CD4-positive, alpha-beta memory T cell (primary cell): ENCODE measurements at regions of chr18 and their contacts with region 1.

Region 1: DNA sequence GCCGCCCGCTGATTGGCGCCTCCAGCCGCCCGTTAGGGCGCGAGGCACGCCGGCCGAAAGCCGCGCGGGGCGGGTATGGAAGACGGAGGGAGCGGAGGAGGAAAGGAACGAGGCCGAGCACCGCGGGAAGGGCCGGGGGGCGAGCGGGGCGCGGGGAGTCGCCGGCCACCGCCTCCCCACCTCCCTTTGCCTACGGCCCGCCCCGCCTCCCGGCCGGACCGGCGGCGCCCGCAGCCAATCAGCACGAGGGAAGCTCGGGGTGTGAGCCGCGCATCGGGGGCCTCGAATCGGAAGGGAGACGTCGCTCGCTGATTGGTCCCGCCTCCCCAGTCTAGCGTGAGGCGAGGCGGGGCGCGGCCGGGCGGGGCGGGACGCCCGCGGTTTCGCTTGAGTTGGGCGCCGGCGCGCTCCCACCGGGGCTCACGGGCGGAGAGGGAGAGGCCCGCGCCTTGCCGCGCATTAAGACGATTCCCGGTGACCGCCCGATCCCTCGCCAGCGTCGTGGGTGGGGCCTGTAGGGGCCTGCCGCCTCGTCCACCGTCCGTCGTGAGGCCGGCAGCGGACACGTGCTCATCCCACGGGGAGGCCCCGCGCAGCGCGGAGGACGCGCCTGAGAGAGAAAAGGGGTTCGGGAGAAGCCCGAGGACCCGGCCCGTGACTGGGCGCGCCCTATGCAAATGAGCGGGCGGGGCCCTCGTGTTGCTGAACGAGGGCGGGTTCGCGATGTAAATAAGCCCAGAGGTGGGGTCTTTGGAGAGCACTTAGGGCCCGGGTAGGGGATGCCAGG is 665 bp upstream of the SMAD2 start:
- DNase-seq: peak; percentile 94 to 97 (median 96)
- H3K4me3 ChIP-seq: peak overlapping the region; percentile 26 to 70
- H3K4me3 Mint-ChIP-seq: peak overlapping the region; percentile 83 to 94 (median 87)
- H3K27ac ChIP-seq: peak overlapping the region; percentile 82
- H3K27ac Mint-ChIP-seq: peak overlapping the region; percentile 87 to 97 (median 93)
- H3K4me1 ChIP-seq: peaks cover 49% of the 10 kb centered on the region
- H3K4me1 Mint-ChIP-seq: peaks cover 36 to 46% (median 41%) of the 10 kb centered on the region in 4 donors
- H3K27me3 ChIP-seq: no peaks in the 10 kb centered on the region
- H3K27me3 Mint-ChIP-seq: no peaks in the 10 kb centered on the region

Region 2: DNA sequence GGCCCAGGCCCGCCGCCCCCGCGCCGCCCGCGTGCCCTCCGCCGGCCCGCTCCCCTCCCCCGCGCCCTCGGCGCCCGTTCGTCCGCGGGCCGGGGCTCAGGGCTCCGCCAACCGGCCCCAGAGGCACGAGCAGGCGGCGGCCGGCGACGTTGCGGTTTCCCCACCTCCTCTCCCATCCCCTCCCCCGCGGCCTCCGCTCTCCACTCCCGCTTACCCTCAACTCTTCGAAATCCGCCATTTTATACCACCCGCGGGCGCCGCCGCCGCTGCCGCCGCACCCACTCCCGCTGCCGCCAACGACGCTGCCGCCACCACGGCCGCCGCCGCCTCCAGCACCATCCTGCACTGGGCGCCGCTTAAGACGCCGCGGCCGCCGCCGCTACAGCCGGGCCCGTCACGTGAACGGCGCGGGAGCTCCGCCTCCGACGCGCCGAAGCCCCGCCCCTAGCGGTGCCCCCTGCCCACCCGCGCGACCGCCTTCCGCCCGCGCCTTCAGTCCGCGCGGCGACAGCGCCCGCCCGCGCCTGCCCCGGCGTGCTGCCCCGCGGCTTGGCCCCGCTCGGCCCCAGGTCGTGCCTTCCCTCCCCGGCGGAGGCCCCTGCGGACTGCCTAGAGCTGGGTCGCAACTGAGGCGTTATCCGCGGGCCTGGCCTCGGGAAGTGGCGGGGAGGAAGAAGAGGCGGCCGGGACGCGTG is 1013.9 kb before region 1 on chr18 and contains the starts of genes KATNAL2 and PIAS2:
- CTCF ChIA-PET with region 1: no interaction called
- POLR2A ChIA-PET with region 1: no interaction called
- intact Hi-C with region 1: loop called (anchors 5 kb)
- DNase-seq: peak; percentile 72 to 79 (median 73)
- H3K4me3 ChIP-seq: peak within 1 kb of the TSS; percentile 60 to 66
- H3K4me3 Mint-ChIP-seq: peak within 1 kb of the TSS; percentile 91 to 96 (median 92)
- H3K27ac ChIP-seq: peak within 1 kb of the TSS; percentile 40
- H3K27ac Mint-ChIP-seq: peak within 1 kb of the TSS; percentile 89 to 95 (median 91)
- H3K4me1 ChIP-seq: peaks cover 27% of the 10 kb centered on the region
- H3K4me1 Mint-ChIP-seq: peaks cover 35 to 56% (median 47%) of the 10 kb centered on the region in 4 donors
- H3K27me3 ChIP-seq: no peaks in the 10 kb centered on the region
- H3K27me3 Mint-ChIP-seq: no peaks in the 10 kb centered on the region
- total RNA-seq, gene KATNAL2: 0.94 to 2.1 TPM
- total RNA-seq, gene PIAS2: 36.2 to 38.3 TPM

Region 3: GRCh38 chr18:47870605-47871004 is 60.5 kb before region 1 on chr18:
- CTCF ChIA-PET with region 1: no interaction called
- POLR2A ChIA-PET with region 1: interaction called, 3 read pairs
- intact Hi-C with region 1: loop called (anchors 2 kb)
- DNase-seq: no peak
- H3K4me3 ChIP-seq: no peak overlapping the region
- H3K4me3 Mint-ChIP-seq: no peak overlapping the region
- H3K27ac ChIP-seq: no peak overlapping the region
- H3K27ac Mint-ChIP-seq: peak overlapping the region in 1 of 7 donors; percentile 6
- H3K4me1 ChIP-seq: peaks cover 11% of the 10 kb centered on the region
- H3K4me1 Mint-ChIP-seq: peaks cover 18 to 49% (median 33%) of the 10 kb centered on the region in 4 donors
- H3K27me3 ChIP-seq: no peaks in the 10 kb centered on the region
- H3K27me3 Mint-ChIP-seq: no peaks in the 10 kb centered on the region

Region 4: GRCh38 chr18:47901624-47902362 is 29.3 kb before region 1 on chr18:
- CTCF ChIA-PET with region 1: interaction called, 5 read pairs
- POLR2A ChIA-PET with region 1: interaction called, 23 read pairs
- intact Hi-C with region 1: loop called (anchors 1 kb)
- DNase-seq: peak in 4 of 5 donors; percentile 41 to 60 (median 48)
- H3K4me3 ChIP-seq: no peak overlapping the region
- H3K4me3 Mint-ChIP-seq: peak overlapping the region in 7 of 8 donors; percentile 39 to 81 (median 65)
- H3K27ac ChIP-seq: peak overlapping the region; percentile 30
- H3K27ac Mint-ChIP-seq: peak overlapping the region; percentile 78 to 94 (median 88)
- H3K4me1 ChIP-seq: peaks cover 53% of the 10 kb centered on the region
- H3K4me1 Mint-ChIP-seq: peaks cover 56 to 85% (median 62%) of the 10 kb centered on the region in 4 donors
- H3K27me3 ChIP-seq: no peaks in the 10 kb centered on the region
- H3K27me3 Mint-ChIP-seq: no peaks in the 10 kb centered on the region

Region 5: GRCh38 chr18:47917923-47918610 is 13.1 kb before region 1 on chr18:
- CTCF ChIA-PET with region 1: interaction called, 3 read pairs
- POLR2A ChIA-PET with region 1: interaction called, 6 read pairs
- intact Hi-C with region 1: loop called (anchors 1 kb)
- DNase-seq: no peak
- H3K4me3 ChIP-seq: no peak overlapping the region
- H3K4me3 Mint-ChIP-seq: peak overlapping the region in 7 of 8 donors; percentile 13 to 76 (median 54)
- H3K27ac ChIP-seq: no peak overlapping the region
- H3K27ac Mint-ChIP-seq: peak overlapping the region; percentile 1 to 96 (median 57)
- H3K4me1 ChIP-seq: peaks cover 77% of the 10 kb centered on the region
- H3K4me1 Mint-ChIP-seq: peaks cover 65 to 96% (median 79%) of the 10 kb centered on the region in 4 donors
- H3K27me3 ChIP-seq: no peaks in the 10 kb centered on the region
- H3K27me3 Mint-ChIP-seq: no peaks in the 10 kb centered on the region

Region 6: DNA sequence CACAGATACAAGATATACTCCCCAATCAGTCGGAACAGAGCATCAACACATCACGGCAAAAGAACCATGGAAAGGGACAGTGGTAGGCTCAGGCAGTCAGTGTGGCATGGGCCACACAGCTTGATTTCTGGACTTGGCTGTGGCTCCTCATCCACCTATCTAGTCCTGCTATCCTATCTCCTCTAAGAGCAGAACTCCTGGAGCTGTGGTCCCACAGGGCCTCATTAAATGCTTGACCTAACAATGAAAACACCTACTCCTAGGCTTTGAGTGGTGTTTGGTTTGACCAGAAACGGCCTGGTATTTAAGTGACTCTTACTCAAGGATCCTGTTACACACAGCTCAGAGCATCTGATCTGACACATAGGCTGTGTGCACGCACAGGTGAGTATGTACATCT is 32.9 kb after region 1 on chr18:
- CTCF ChIA-PET with region 1: no interaction called
- POLR2A ChIA-PET with region 1: no interaction called
- intact Hi-C with region 1: no loop called
- DNase-seq: no peak
- H3K4me3 ChIP-seq: no peak overlapping the region
- H3K4me3 Mint-ChIP-seq: no peak overlapping the region
- H3K27ac ChIP-seq: no peak overlapping the region
- H3K27ac Mint-ChIP-seq: no peak overlapping the region
- H3K4me1 ChIP-seq: no peaks in the 10 kb centered on the region
- H3K4me1 Mint-ChIP-seq: no peaks in the 10 kb centered on the region
- H3K27me3 ChIP-seq: no peaks in the 10 kb centered on the region
- H3K27me3 Mint-ChIP-seq: peaks cover 0 to 3% of the 10 kb centered on the region in 2 donors

Region 7: GRCh38 chr18:48022531-48023329 is 91.6 kb after region 1 on chr18:
- CTCF ChIA-PET with region 1: no interaction called
- POLR2A ChIA-PET with region 1: no interaction called
- intact Hi-C with region 1: loop called (anchors 1 kb)
- DNase-seq: peak in 4 of 5 donors; percentile 31 to 35 (median 34)
- H3K4me3 ChIP-seq: no peak overlapping the region
- H3K4me3 Mint-ChIP-seq: no peak overlapping the region
- H3K27ac ChIP-seq: no peak overlapping the region
- H3K27ac Mint-ChIP-seq: no peak overlapping the region
- H3K4me1 ChIP-seq: no peaks in the 10 kb centered on the region
- H3K4me1 Mint-ChIP-seq: peaks cover 0 to 5% (median 2%) of the 10 kb centered on the region in 4 donors
- H3K27me3 ChIP-seq: peaks cover 6% of the 10 kb centered on the region
- H3K27me3 Mint-ChIP-seq: peaks cover 25 to 28% of the 10 kb centered on the region in 2 donors

Region 8: DNA sequence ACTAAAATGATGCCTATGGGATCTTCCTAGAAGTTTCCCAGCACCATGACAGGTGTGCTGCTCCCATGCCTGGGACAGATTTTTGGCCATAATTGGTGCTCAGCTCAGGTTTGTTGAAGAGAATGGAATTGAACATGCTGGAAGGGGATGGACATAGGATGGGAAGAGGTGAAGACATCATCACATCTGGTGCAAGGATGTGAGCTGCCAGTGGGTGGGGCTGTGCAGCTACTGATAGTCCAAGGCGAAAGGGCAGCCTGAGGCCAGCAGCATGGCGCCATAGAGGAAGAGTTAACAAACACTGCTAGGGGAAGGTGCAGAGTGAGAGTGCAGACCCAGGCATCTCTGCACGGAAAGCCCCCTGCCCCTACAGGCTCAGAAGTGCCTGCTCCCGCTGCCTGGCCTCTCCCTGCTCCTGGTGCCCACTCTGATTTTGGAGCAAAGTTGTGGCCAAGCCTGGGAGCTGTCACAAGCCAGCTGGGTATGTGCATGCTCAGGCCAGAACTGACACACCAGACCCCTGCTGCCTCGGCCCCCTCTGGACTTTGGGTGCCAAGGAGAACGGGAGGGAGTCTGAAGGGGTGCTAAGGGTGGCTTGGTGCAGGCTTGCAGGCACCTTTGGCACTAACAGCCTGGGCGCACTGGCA is 299.5 kb after region 1 on chr18:
- CTCF ChIA-PET with region 1: no interaction called
- POLR2A ChIA-PET with region 1: no interaction called
- intact Hi-C with region 1: no loop called
- DNase-seq: peak in 1 of 5 donors; percentile 14
- H3K4me3 ChIP-seq: no peak overlapping the region
- H3K4me3 Mint-ChIP-seq: peak overlapping the region in 1 of 8 donors; percentile 1
- H3K27ac ChIP-seq: no peak overlapping the region
- H3K27ac Mint-ChIP-seq: peak overlapping the region in 1 of 7 donors; percentile 10
- H3K4me1 ChIP-seq: peaks cover 21% of the 10 kb centered on the region
- H3K4me1 Mint-ChIP-seq: peaks cover 8 to 23% (median 14%) of the 10 kb centered on the region in 4 donors
- H3K27me3 ChIP-seq: no peaks in the 10 kb centered on the region
- H3K27me3 Mint-ChIP-seq: peaks cover 0 to 4% of the 10 kb centered on the region in 2 donors

Region 9: DNA sequence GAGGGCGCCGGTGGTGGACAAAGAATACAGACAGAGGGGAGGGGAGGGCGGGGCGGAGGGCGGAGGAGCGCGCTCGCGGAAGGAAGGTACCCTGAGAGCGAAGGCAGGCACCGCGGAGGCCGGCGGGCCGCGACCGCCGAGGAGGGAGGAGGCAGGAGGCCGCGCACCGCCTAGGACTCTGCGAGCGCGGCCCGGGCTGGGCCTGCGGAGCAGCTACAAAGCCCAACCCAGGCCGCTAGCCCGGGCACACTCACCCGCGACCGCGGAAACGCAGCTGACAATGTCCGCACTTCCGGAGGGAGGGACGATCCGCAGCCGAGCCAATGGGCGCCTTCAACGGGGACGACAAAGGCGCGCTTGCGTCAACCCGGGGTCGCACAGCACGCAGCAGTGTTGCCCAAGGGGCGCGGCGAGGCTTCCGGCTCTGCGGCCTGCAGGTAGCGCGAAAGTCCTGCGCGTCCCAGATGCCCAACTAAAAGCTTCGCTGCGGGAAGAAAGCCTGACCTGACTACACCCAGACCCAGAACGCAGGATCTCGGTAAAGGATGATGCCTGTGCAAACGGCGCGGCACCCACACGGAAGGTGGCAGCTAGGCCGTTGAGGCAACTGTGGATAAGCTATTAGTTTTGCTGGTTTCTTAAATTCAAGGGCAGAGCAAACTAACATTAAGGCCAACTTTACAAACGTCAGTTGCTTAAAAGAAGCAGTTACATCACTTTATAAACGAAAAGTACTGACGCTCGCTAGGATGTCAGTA is 1556.0 kb after region 1 on chr18 and contains the start of gene C18orf32:
- CTCF ChIA-PET with region 1: no interaction called
- POLR2A ChIA-PET with region 1: no interaction called
- intact Hi-C with region 1: loop called (anchors 2 kb)
- DNase-seq: peak; percentile 93 to 97 (median 94)
- H3K4me3 ChIP-seq: peak within 1 kb of the TSS; percentile 66 to 71
- H3K4me3 Mint-ChIP-seq: peak within 1 kb of the TSS; percentile 91 to 99 (median 96)
- H3K27ac ChIP-seq: peak within 1 kb of the TSS; percentile 81
- H3K27ac Mint-ChIP-seq: peak within 1 kb of the TSS; percentile 93 to 100 (median 98)
- H3K4me1 ChIP-seq: peaks cover 66% of the 10 kb centered on the region
- H3K4me1 Mint-ChIP-seq: peaks cover 49 to 82% (median 63%) of the 10 kb centered on the region in 4 donors
- H3K27me3 ChIP-seq: no peaks in the 10 kb centered on the region
- H3K27me3 Mint-ChIP-seq: no peaks in the 10 kb centered on the region
- total RNA-seq, gene C18orf32: 48.7 to 55.3 TPM